Ovary (tissue), 10 donors: ENCODE measurements at regions of chr2 and their contacts with region 1.

Region 1: DNA sequence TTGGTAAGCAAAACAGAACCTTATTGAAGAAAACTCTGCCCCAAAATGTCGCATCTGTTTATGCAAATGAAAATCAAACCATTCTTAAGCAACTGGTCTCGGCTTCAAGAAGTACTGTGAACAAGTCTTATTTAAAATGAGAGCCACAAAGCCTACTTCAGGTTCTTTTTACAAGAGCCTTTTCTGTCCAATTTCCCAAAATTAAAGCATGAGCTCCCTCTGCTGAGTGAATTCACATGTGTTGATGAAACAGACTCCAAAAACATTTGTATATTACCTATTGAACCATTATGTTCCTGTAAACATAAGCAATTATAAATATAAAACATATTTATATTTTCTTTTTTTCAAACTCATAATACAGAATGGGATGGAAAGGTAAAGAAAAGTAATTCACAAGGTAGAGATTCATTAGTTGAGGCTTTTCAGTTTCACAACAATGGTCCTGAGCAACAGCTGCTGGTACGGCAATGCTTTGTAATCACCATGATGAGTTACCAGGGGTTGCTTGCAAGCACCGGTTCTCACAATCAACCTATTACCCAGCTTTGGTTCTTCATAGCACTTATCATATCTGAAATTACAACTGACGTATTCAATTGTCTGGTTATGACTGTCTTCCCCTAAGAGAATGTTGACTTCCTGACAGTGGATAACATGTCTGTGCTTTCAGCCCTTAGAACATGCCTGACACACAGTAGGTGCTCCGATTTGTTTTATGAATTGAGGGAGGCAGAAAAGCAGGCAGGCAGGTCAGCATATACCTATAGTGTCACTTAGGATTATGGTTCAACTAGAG is 108.4 kb upstream of the BZW1 start:
- DNase-seq: peak in 2 of 5 donors; percentile 19 to 55
- H3K4me3 ChIP-seq: no peak overlapping the region
- H3K27ac ChIP-seq: no peak overlapping the region
- H3K4me1 ChIP-seq: peaks cover 3% of the 10 kb centered on the region
- H3K27me3 ChIP-seq: no peaks in the 10 kb centered on the region
- CTCF ChIP-seq: peak; percentile 36 to 77 (median 65)
- EP300 ChIP-seq: no peak
- POLR2A ChIP-seq: no peak

Region 2: DNA sequence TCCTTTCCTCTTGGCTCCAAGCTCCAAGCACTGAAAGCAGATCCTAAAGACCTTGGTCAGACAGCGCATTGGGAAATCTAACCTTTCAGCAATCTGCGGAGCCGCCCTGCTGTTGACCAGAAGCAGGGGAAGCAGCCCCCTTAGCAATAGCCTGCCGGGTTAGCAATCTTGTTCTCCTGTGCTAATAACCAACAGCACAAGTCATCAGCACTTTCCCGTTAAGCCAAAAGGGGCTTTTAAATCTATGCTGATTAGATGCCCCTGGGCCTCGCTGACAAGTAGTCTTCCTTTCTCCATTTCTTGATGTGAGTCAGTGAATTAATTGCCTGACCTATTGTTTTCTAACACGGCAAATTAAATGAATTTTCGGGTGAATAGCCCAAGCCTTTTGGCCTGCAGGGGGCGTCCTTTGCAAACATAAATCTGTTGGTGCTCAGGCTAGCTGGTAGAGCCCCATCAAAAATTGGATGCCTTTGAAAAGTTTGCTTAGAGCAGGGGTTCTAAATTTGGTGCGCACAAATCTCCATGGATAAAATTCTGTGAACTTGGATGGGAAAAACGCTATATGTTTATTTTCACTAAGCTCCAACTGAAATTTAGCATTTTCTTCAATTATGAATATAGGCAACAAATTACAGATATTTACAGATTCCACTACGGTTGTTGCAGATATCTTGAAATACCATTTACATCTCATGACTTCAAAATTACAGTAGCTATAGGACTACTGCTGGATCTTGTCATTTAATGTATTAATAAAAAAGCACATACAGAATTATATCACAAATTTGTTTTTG is 723.3 kb before region 1 on chr2:
- intact Hi-C with region 1: loop called in 1 of 4 experiments (anchors 10 kb)
- DNase-seq: peak; percentile 81 to 93 (median 89)
- H3K4me3 ChIP-seq: no peak overlapping the region
- H3K27ac ChIP-seq: no peak overlapping the region
- H3K4me1 ChIP-seq: no peaks in the 10 kb centered on the region
- H3K27me3 ChIP-seq: no peaks in the 10 kb centered on the region
- CTCF ChIP-seq: peak; percentile 67 to 86 (median 84)
- EP300 ChIP-seq: no peak
- POLR2A ChIP-seq: no peak

Region 3: DNA sequence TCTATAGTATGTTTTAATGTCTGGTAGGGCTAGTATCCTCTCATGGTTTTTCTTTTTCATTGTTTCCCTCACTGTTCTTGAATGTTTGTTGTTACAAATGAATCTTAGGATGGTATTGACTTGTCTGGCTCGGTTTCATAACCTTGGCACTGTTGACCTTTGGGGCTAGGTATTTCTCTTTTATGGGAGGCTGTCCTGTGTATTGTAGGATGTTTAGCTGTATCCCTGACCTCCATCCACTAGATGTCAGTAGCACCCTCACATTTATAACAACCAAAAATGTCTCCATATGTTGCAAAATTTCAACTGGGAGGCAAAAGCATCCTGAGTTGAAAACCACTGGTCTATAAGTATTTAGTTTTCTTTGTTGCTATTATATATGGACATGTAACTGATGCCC is 124.5 kb before region 1 on chr2:
- intact Hi-C with region 1: loop called in 2 of 4 experiments (anchors 5 to 10 kb)
- DNase-seq: peak in 1 of 5 donors; percentile 28
- H3K4me3 ChIP-seq: no peak overlapping the region
- H3K27ac ChIP-seq: no peak overlapping the region
- H3K4me1 ChIP-seq: no peaks in the 10 kb centered on the region
- H3K27me3 ChIP-seq: no peaks in the 10 kb centered on the region
- CTCF ChIP-seq: peak; percentile 24 to 71 (median 57)
- EP300 ChIP-seq: no peak
- POLR2A ChIP-seq: no peak

Region 4: GRCh38 chr2:200585730-200586643 is 117.3 kb before region 1 on chr2 and contains the start of gene AOX1:
- intact Hi-C with region 1: loop called (anchors 5 to 10 kb)
- DNase-seq: peak; percentile 79 to 87 (median 82)
- H3K4me3 ChIP-seq: peak within 1 kb of the TSS; percentile 67
- H3K27ac ChIP-seq: peak within 1 kb of the TSS; percentile 80 to 85
- H3K4me1 ChIP-seq: peaks cover 2% of the 10 kb centered on the region
- H3K27me3 ChIP-seq: no peaks in the 10 kb centered on the region
- CTCF ChIP-seq: no peak
- EP300 ChIP-seq: no peak
- POLR2A ChIP-seq: peak; percentile 59
- total RNA-seq, gene AOX1: 46.0 to 102 (median 67.2) TPM

Region 5: DNA sequence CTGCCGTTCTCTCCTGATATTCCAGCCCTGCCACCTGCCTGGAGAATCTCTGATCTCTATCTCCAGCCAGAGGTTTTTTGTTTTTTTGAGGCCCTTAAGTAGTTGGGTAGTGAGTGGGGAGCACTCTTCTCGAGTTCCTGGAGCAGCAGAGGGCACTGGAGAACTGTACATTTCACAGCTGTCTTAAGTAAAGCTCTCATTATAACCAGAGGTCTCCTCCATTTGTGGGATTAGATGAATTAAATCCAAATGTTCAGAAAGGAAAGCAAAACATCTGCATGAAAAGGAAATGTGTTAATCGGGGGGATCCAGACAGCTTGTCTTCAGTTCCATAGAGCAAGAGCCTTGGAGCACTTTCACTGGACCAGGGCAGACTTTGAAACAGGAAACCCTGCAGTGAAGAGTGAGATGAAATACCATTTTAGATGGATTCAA is 84.7 kb before region 1 on chr2:
- intact Hi-C with region 1: loop called in 1 of 4 experiments (anchors 5 kb)
- DNase-seq: peak in 2 of 5 donors; percentile 14 to 23
- H3K4me3 ChIP-seq: no peak overlapping the region
- H3K27ac ChIP-seq: peak overlapping the region in 1 of 2 donors; percentile 75
- H3K4me1 ChIP-seq: peaks cover 16% of the 10 kb centered on the region
- H3K27me3 ChIP-seq: no peaks in the 10 kb centered on the region
- CTCF ChIP-seq: no peak
- EP300 ChIP-seq: no peak
- POLR2A ChIP-seq: no peak